B cell (primary cell): ENCODE measurements at regions of chr7 and their contacts with region 1.

Region 1: GRCh38 chr7:90736968-90737939 is 141.1 kb downstream of the CDK14 start:
- DNase-seq: peak; percentile 89
- ATAC-seq: peak; percentile 87
- H3K4me3 ChIP-seq: peak overlapping the region in 2 of 5 experiments; percentile 10 to 50
- H3K4me3 Mint-ChIP-seq: peak overlapping the region; percentile 66
- H3K27ac ChIP-seq: peak overlapping the region; percentile 86 to 91
- H3K27ac Mint-ChIP-seq: peak overlapping the region; percentile 87
- H3K4me1 ChIP-seq: peaks cover 51 to 57% of the 10 kb centered on the region in 2 donors
- H3K4me1 Mint-ChIP-seq: peaks cover 76% of the 10 kb centered on the region
- H3K27me3 ChIP-seq: no peaks in the 10 kb centered on the region
- H3K27me3 Mint-ChIP-seq: no peaks in the 10 kb centered on the region
- CTCF ChIP-seq: no peak

Region 2: DNA sequence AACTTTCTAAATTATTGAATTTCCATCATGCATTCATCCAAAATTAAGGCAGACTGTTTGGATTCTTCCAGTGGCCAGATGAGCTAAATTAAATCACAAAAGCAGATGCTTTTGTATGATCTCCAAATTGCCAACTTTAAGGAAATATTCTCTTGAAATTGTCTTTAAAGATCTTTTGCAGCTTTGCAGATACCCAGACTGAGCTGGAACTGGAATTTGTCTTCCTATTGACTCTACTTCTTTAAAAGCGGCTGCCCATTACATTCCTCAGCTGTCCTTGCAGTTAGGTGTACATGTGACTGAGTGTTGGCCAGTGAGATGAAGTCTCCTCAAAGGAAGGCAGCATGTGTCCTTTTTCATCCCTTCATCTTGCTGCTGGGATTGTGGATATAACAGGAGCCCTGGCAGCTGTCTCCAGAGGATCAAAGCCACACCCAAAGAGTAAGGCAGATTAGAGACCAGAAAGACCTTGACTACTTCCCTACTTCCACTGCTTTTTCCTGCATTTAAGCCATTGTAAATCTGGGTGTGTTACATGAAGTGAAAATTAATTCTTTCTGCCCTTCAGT is 500.4 kb before region 1 on chr7:
- CTCF ChIA-PET with region 1: no interaction called
- POLR2A ChIA-PET with region 1: no interaction called
- intact Hi-C with region 1: no loop called
- DNase-seq: no peak
- ATAC-seq: no peak
- H3K4me3 ChIP-seq: no peak overlapping the region
- H3K4me3 Mint-ChIP-seq: no peak overlapping the region
- H3K27ac ChIP-seq: no peak overlapping the region
- H3K27ac Mint-ChIP-seq: no peak overlapping the region
- H3K4me1 ChIP-seq: no peaks in the 10 kb centered on the region
- H3K4me1 Mint-ChIP-seq: peaks cover 3% of the 10 kb centered on the region
- H3K27me3 ChIP-seq: peaks cover 0 to 10% (median 3%) of the 10 kb centered on the region in 4 experiments
- H3K27me3 Mint-ChIP-seq: peaks cover 6% of the 10 kb centered on the region
- CTCF ChIP-seq: no peak

Region 3: GRCh38 chr7:90613088-90613498 is 124.2 kb before region 1 on chr7:
- CTCF ChIA-PET with region 1: no interaction called
- POLR2A ChIA-PET with region 1: no interaction called
- intact Hi-C with region 1: loop called (anchors 1 kb)
- DNase-seq: peak; percentile 39
- ATAC-seq: peak; percentile 88
- H3K4me3 ChIP-seq: peak overlapping the region in 3 of 5 experiments; percentile 5 to 13 (median 13)
- H3K4me3 Mint-ChIP-seq: peak overlapping the region; percentile 50
- H3K27ac ChIP-seq: peak overlapping the region in 1 of 2 donors; percentile 66
- H3K27ac Mint-ChIP-seq: peak overlapping the region; percentile 87
- H3K4me1 ChIP-seq: peaks cover 10 to 15% of the 10 kb centered on the region in 2 donors
- H3K4me1 Mint-ChIP-seq: peaks cover 37% of the 10 kb centered on the region
- H3K27me3 ChIP-seq: no peaks in the 10 kb centered on the region
- H3K27me3 Mint-ChIP-seq: no peaks in the 10 kb centered on the region
- CTCF ChIP-seq: no peak

Region 4: GRCh38 chr7:90666186-90666585 is 71.1 kb before region 1 on chr7:
- CTCF ChIA-PET with region 1: no interaction called
- POLR2A ChIA-PET with region 1: no interaction called
- intact Hi-C with region 1: no loop called
- DNase-seq: no peak
- ATAC-seq: no peak
- H3K4me3 ChIP-seq: no peak overlapping the region
- H3K4me3 Mint-ChIP-seq: no peak overlapping the region
- H3K27ac ChIP-seq: no peak overlapping the region
- H3K27ac Mint-ChIP-seq: no peak overlapping the region
- H3K4me1 ChIP-seq: peaks cover 15 to 16% of the 10 kb centered on the region in 2 donors
- H3K4me1 Mint-ChIP-seq: peaks cover 35% of the 10 kb centered on the region
- H3K27me3 ChIP-seq: no peaks in the 10 kb centered on the region
- H3K27me3 Mint-ChIP-seq: no peaks in the 10 kb centered on the region
- CTCF ChIP-seq: no peak

Region 5: DNA sequence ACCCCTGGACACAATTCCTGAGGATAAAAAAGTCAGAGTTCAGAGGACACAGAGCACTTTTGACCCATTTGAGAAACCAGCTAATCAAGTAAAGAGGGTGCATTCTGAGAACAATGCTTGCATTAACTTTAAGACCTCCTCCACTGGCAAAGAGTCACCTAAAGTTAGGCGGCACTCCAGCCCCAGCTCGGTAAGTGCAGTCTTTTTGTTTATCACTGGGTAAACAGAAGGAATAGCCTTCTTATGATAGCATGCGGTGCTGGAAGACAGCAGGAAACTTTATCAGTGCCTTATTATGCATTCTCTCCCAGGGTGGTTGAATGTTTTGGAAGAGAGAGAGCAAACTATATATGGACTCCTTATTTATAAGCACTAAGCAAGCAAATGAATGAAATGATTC is 10.6 kb before region 1 on chr7:
- CTCF ChIA-PET with region 1: interaction called, 3 read pairs
- POLR2A ChIA-PET with region 1: no interaction called
- intact Hi-C with region 1: loop called (anchors 1 kb)
- DNase-seq: no peak
- ATAC-seq: no peak
- H3K4me3 ChIP-seq: peak overlapping the region in 4 of 5 experiments; percentile 9 to 59 (median 23)
- H3K4me3 Mint-ChIP-seq: peak overlapping the region; percentile 79
- H3K27ac ChIP-seq: peak overlapping the region; percentile 30 to 84
- H3K27ac Mint-ChIP-seq: peak overlapping the region; percentile 81
- H3K4me1 ChIP-seq: peaks cover 45 to 70% of the 10 kb centered on the region in 2 donors
- H3K4me1 Mint-ChIP-seq: peaks cover 81% of the 10 kb centered on the region
- H3K27me3 ChIP-seq: no peaks in the 10 kb centered on the region
- H3K27me3 Mint-ChIP-seq: no peaks in the 10 kb centered on the region
- CTCF ChIP-seq: no peak

Region 6: GRCh38 chr7:90749262-90749661 is 12.0 kb after region 1 on chr7:
- CTCF ChIA-PET with region 1: interaction called, 11 read pairs
- POLR2A ChIA-PET with region 1: no interaction called
- intact Hi-C with region 1: no loop called
- DNase-seq: no peak
- ATAC-seq: no peak
- H3K4me3 ChIP-seq: no peak overlapping the region
- H3K4me3 Mint-ChIP-seq: peak overlapping the region; percentile 52
- H3K27ac ChIP-seq: no peak overlapping the region
- H3K27ac Mint-ChIP-seq: peak overlapping the region; percentile 54
- H3K4me1 ChIP-seq: peaks cover 15 to 24% of the 10 kb centered on the region in 2 donors
- H3K4me1 Mint-ChIP-seq: peaks cover 66% of the 10 kb centered on the region
- H3K27me3 ChIP-seq: no peaks in the 10 kb centered on the region
- H3K27me3 Mint-ChIP-seq: no peaks in the 10 kb centered on the region
- CTCF ChIP-seq: no peak

Region 7: GRCh38 chr7:90766814-90767564 is 29.7 kb after region 1 on chr7:
- CTCF ChIA-PET with region 1: no interaction called
- POLR2A ChIA-PET with region 1: no interaction called
- intact Hi-C with region 1: loop called (anchors 5 kb)
- DNase-seq: no peak
- ATAC-seq: no peak
- H3K4me3 ChIP-seq: no peak overlapping the region
- H3K4me3 Mint-ChIP-seq: no peak overlapping the region
- H3K27ac ChIP-seq: no peak overlapping the region
- H3K27ac Mint-ChIP-seq: peak overlapping the region; percentile 57
- H3K4me1 ChIP-seq: peaks cover 13 to 19% of the 10 kb centered on the region in 2 donors
- H3K4me1 Mint-ChIP-seq: peaks cover 55% of the 10 kb centered on the region
- H3K27me3 ChIP-seq: no peaks in the 10 kb centered on the region
- H3K27me3 Mint-ChIP-seq: no peaks in the 10 kb centered on the region
- CTCF ChIP-seq: no peak